ENCODE measurements at regions of chr14 and their contacts with region 1.

Region 1: GRCh38 chr14:22039938-22040775 is 366.5 kb upstream of the OR4E1 start:
- DNase-seq: peak; percentile 79
- H3K4me3 Mint-ChIP-seq: peak overlapping the region; percentile 77
- H3K27ac Mint-ChIP-seq: peak overlapping the region; percentile 83
- H3K4me1 Mint-ChIP-seq: peaks cover 8% of the 10 kb centered on the region
- H3K27me3 Mint-ChIP-seq: peaks cover 7% of the 10 kb centered on the region

Region 2: GRCh38 chr14:21894003-21894897 is 145.9 kb before region 1 on chr14:
- intact Hi-C with region 1: no loop called
- DNase-seq: peak; percentile 86
- H3K4me3 Mint-ChIP-seq: peak overlapping the region; percentile 80
- H3K27ac Mint-ChIP-seq: peak overlapping the region; percentile 88
- H3K4me1 Mint-ChIP-seq: peaks cover 7% of the 10 kb centered on the region
- H3K27me3 Mint-ChIP-seq: peaks cover 2% of the 10 kb centered on the region

Region 3: GRCh38 chr14:21987937-21988336 is 52.2 kb before region 1 on chr14:
- intact Hi-C with region 1: loop called (anchors 5 kb)
- DNase-seq: peak; percentile 73
- H3K4me3 Mint-ChIP-seq: peak overlapping the region; percentile 46
- H3K27ac Mint-ChIP-seq: peak overlapping the region; percentile 88
- H3K4me1 Mint-ChIP-seq: peaks cover 21% of the 10 kb centered on the region
- H3K27me3 Mint-ChIP-seq: peaks cover 8% of the 10 kb centered on the region

Region 4: GRCh38 chr14:22002860-22003309 is 37.3 kb before region 1 on chr14:
- intact Hi-C with region 1: loop called (anchors 2 kb)
- DNase-seq: peak; percentile 91
- H3K4me3 Mint-ChIP-seq: peak overlapping the region; percentile 83
- H3K27ac Mint-ChIP-seq: peak overlapping the region; percentile 74
- H3K4me1 Mint-ChIP-seq: peaks cover 27% of the 10 kb centered on the region
- H3K27me3 Mint-ChIP-seq: no peaks in the 10 kb centered on the region

Measured in activated CD4-positive, alpha-beta T cell treated with anti-CD3 and anti-CD28 coated beads, Interleukin-2, amount 10 ng/mL, durations not matched to agents 24 days and 14 days (primary cell).